GM10248 (cell line): ENCODE measurements at regions of chr17 and their contacts with region 1.

Region 1: GRCh38 chr17:45218895-45219661 is 2.6 kb upstream of the FMNL1 start:
- DNase-seq: peak; percentile 74
- CTCF ChIP-seq: peak; percentile 94

Region 2: DNA sequence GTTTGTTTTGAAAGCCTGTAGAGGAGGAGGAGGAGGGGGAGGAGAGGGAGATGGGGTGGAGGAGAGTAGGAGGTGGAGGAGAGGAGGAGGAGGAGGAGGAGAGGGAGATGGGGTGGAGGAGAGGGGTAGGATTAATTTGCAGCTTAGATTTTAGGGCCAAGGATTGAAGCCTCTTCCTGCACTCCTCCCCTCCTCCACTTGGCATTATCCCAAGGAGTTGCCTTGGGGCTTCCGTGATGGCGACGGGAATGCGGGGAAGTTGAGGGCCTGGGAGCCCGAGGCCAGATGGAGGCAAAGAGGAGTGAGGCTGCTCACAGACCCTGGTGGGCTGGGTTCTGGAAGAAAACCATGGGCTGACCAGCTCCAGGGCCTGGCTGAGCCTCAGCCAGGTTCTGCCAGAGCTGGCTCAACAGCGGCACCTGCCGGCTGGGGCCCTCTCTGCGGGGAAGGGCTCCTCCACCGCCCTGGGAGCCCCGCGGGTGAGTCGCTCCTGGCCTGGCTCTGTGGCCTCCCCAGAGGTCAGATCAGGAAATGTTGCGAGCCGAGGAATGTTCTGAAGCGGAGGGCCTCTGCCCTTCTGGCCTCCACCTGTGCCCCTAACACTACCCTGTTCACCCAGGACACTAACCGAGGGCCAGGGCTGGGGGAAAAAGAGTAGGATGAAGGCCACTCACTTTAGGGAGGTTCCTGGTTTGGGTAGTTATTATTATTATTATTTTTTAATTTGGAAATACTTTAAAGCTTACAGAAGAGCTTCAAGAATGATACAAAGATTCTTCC is 21.3 kb before region 1 on chr17:
- CTCF ChIA-PET with region 1: interaction called, 51 read pairs
- POLR2A ChIA-PET with region 1: no interaction called
- DNase-seq: peak; percentile 92
- CTCF ChIP-seq: peak; percentile 94

Region 3: DNA sequence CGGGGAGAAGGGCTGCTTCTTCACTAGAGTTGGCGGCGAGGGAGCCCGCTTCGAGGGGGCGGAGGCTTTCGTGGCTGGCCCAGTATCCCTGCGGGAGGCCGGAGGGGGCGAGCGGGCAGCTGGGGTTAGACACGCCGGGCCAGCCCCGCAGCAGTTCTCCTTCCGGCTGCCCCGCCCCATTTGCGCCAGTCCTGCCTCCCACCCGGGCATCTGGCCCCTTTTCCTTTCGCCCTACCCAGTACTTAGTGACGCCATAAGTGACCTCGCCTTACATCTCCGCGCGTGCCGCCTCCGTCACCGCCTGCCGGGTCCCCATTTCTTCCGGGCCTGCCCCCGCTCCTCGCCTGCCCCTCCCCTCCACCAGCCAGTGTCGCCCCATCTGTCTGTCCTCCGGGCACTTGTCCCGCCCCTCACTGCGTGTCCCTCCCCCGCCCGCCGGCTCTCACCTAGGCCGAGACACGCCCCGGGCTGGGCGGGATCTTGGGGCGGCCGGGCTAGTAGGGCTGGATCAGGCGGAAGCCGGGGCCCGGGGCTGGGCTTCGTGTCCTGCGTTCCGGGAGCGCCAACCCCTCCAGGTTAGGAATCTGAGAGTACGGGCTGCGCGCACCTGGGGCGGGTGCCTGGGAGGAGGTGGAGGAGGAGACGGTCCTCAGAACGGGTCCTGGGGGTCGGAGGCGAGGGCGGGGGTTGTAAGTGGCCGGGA is 28.5 kb after region 1 on chr17:
- CTCF ChIA-PET with region 1: interaction called, 68 read pairs
- POLR2A ChIA-PET with region 1: no interaction called
- DNase-seq: peak; percentile 99
- CTCF ChIP-seq: no peak

Region 4: GRCh38 chr17:45261577-45262515 is 42.8 kb after region 1 on chr17 and contains the start of gene SPATA32:
- CTCF ChIA-PET with region 1: interaction called, 22 read pairs
- POLR2A ChIA-PET with region 1: no interaction called
- DNase-seq: peak; percentile 81
- CTCF ChIP-seq: no peak

Region 5: GRCh38 chr17:45307290-45308015 is 88.4 kb after region 1 on chr17:
- CTCF ChIA-PET with region 1: interaction called, 12 read pairs
- POLR2A ChIA-PET with region 1: no interaction called
- DNase-seq: peak; percentile 66
- CTCF ChIP-seq: no peak

Region 6: GRCh38 chr17:45320931-45321461 is 101.9 kb after region 1 on chr17:
- CTCF ChIA-PET with region 1: no interaction called
- POLR2A ChIA-PET with region 1: no interaction called
- DNase-seq: no peak
- CTCF ChIP-seq: no peak

Region 7: DNA sequence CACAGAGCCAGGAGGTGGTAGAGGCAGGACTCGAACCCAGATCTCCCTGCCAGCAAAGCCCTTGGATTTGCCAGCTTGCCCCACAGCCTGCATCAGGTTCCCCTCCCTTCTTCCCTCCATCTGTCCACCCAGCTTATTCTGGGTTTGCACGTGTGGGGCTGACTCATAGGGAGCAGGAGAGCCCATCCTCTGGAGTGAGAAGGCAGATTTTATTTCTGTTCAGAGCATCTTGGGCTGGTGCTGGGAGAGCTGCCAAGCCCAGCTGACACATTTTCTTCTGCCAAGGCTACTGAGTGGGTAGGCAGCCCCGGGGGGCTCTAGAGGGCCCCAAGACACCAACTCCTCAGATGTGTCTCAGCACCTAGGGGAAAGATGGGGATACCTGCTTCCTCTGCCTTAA is 458.7 kb after region 1 on chr17:
- CTCF ChIA-PET with region 1: no interaction called
- POLR2A ChIA-PET with region 1: no interaction called
- DNase-seq: no peak
- CTCF ChIP-seq: no peak